Heart right ventricle (tissue), 16 donors: ENCODE measurements at regions of chr2 and their contacts with region 1.

Region 1: GRCh38 chr2:47386551-47386950 is 16.4 kb upstream of the MSH2 start:
- DNase-seq: no peak
- ATAC-seq: no peak
- H3K4me3 ChIP-seq: no peak overlapping the region
- H3K27ac ChIP-seq: no peak overlapping the region
- H3K4me1 ChIP-seq: no peaks in the 10 kb centered on the region
- H3K27me3 ChIP-seq: no peaks in the 10 kb centered on the region
- CTCF ChIP-seq: no peak

Region 2: DNA sequence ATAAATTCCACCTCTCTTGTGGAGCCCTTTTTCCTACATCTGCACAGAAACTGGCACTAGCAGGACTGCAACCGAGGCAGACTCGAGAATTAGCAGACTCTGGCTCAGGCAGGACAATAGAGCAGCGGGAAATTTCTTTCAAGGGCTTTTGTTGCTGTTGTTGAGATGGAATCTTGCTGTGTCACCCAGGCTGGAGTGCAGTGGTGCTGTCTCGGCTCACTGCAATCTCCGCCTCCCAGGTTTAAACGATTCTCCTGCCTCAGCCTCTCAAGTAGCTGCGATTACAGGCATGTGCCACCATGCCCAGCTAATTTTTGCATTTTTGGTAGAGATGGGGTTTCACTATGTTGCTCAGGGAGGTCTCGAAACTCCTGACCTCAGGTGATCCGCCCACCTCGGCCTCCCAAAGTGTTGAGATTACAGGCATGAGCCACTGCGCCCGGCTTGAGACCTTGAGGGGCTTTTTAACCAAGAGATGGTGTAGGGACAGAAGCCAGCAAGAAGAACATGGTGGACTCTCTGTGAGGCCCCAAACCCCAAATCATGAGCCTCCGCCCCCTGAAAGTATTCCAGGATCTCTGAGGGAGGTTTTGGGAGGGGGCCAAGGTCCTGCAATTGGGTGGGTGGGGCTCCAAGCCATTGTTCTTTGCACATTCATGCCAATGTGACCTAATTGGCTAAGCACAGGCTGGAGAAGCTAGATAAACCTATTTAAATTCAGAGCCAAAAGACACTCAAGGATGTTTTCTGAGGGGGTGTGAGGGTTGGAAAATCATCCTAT is 52.0 kb before region 1 on chr2:
- intact Hi-C with region 1: loop called (anchors 1 to 5 kb)
- DNase-seq: no peak
- ATAC-seq: peak; percentile 29 to 68 (median 39)
- H3K4me3 ChIP-seq: no peak overlapping the region
- H3K27ac ChIP-seq: peak overlapping the region in 7 of 10 donors; percentile 4 to 82 (median 47)
- H3K4me1 ChIP-seq: peaks cover 0 to 24% (median 8%) of the 10 kb centered on the region in 9 donors
- H3K27me3 ChIP-seq: no peaks in the 10 kb centered on the region
- CTCF ChIP-seq: no peak

Region 3: DNA sequence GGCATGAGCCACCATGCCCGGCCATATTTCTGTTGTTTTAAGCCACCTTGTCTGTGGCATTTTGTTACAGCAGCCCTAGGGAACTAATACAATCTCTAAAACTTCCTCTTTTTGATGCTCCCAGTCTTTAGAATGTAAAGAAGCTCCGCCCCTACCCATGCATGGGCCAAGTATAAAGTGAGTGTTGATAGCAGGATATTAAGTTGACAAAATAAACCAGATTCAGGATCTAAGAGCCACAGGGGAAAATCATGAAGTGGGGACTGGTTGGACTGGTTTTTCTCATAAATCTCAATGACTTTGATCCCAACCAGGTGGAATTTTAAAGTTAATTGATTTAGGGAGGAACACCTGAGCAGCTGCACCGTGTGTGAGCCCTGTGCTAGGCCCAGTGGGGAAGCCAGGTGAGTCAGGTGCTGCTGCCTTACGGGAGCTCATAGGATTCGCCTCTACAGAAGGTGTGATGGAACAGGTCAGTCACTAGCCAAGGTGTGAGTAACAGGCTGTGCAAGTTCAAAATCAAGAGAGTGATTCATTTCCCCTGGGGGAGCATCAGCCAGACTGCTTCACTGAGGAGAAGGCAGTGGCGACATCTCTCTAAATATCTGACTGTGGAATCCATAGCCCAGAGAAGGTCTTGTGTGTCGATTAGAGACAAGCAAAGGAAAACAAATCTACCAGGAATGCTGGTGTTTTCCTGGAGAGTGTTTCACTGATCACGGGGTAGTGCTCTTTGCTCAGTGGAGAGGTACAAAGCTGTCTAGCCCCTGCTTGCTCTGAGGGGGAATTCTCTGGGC is 46.6 kb before region 1 on chr2:
- intact Hi-C with region 1: loop called (anchors 1 to 5 kb)
- DNase-seq: no peak
- ATAC-seq: no peak
- H3K4me3 ChIP-seq: no peak overlapping the region
- H3K27ac ChIP-seq: no peak overlapping the region
- H3K4me1 ChIP-seq: peaks cover 0 to 38% (median 14%) of the 10 kb centered on the region in 9 donors
- H3K27me3 ChIP-seq: peaks cover 0 to under 1% (median 0%) of the 10 kb centered on the region in 7 donors
- CTCF ChIP-seq: no peak